ENCODE measurements at regions of chr15 and their contacts with region 1.

Region 1: GRCh38 chr15:40893733-40894688 is at the start of gene VPS18:
- DNase-seq: peak; percentile 98 to 99
- H3K4me3 ChIP-seq: peak within 1 kb of the TSS; percentile 77 to 95 (median 86)
- H3K27ac ChIP-seq: peak within 1 kb of the TSS; percentile 91 to 96
- H3K4me1 ChIP-seq: peaks cover 5 to 10% of the 10 kb centered on the region in 2 donors
- H3K27me3 ChIP-seq: no peaks in the 10 kb centered on the region
- CTCF ChIP-seq: peak; percentile 99 to 100 (median 99)
- POLR2A ChIP-seq: peak; percentile 57
- total RNA-seq, gene VPS18: 23.2 to 25.0 (median 23.9) TPM

Region 2: DNA sequence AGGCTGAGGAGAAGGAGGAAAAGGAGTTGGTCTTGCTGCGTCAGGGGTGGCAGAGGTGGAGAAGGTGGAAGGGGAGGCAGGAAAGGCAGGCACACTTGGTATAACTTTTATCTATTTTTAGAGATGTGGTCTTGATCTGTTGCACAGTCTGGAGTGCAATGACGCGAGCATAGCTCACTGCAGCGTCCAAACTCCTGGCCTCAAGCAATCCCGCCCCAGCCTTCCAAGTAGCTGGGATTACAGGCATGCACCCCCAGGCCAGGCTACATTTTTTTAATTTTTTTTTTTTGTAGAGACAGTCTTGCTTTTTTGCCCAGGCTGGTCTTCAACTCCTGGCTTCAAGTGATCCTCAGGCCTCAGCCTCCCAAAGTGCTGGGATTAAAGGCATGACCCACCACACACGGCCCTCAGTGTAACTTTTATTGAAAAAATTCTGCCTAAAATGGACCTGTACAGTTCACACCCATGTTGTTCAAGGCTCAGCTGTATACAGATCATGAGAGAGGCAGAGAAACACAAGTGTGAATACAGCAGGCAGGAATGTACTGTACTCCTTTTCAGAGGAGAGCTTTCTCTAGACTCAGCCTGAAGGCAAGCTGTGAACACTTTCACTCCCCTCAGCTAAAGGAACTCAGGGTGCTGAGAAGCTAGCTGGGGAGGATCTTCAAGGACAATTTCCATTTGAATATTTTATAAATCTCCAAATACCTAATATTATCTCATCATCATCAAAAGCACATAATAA is 17.8 kb before region 1 on chr15:
- intact Hi-C with region 1: loop called (anchors 1 kb)
- DNase-seq: no peak
- H3K4me3 ChIP-seq: no peak overlapping the region
- H3K27ac ChIP-seq: no peak overlapping the region
- H3K4me1 ChIP-seq: no peaks in the 10 kb centered on the region
- H3K27me3 ChIP-seq: no peaks in the 10 kb centered on the region
- CTCF ChIP-seq: no peak
- POLR2A ChIP-seq: no peak

Region 3: DNA sequence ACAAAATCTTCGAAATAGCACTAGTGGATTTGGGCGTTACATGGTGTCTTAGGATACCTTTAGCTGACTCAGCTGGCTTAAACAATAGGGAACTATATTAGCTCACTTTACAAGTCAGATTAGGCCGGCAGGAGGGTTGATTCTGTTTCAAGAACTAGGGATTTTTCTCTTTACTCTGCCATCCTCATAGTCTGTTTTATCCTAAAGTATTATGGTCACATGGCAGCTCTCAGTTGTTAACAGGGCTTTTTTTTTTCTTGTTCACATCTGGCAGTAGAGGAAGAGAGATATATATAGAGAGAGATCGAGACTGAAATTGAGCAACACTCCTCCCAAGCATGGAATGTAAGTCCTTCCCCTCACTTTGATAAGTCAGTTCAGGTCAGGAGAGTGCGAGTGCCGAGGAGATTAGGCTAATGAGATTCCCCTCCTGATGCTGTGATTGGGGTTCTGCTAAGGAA is 369.9 kb after region 1 on chr15:
- intact Hi-C with region 1: no loop called
- DNase-seq: no peak
- H3K4me3 ChIP-seq: no peak overlapping the region
- H3K27ac ChIP-seq: no peak overlapping the region
- H3K4me1 ChIP-seq: no peaks in the 10 kb centered on the region
- H3K27me3 ChIP-seq: no peaks in the 10 kb centered on the region
- CTCF ChIP-seq: no peak
- POLR2A ChIP-seq: no peak

Measured in breast epithelium (tissue), 4 donors.